Dorsolateral prefrontal cortex (tissue), 120 donors: ENCODE measurements at regions of chr7 and their contacts with region 1.

Region 1: GRCh38 chr7:105890290-105890997 is 14.0 kb upstream of the ATXN7L1 start:
- DNase-seq: no peak
- H3K4me3 ChIP-seq: no peak overlapping the region
- H3K27ac ChIP-seq: no peak overlapping the region
- H3K27me3 ChIP-seq: no peaks in the 10 kb centered on the region
- CTCF ChIP-seq: no peak

Region 2: DNA sequence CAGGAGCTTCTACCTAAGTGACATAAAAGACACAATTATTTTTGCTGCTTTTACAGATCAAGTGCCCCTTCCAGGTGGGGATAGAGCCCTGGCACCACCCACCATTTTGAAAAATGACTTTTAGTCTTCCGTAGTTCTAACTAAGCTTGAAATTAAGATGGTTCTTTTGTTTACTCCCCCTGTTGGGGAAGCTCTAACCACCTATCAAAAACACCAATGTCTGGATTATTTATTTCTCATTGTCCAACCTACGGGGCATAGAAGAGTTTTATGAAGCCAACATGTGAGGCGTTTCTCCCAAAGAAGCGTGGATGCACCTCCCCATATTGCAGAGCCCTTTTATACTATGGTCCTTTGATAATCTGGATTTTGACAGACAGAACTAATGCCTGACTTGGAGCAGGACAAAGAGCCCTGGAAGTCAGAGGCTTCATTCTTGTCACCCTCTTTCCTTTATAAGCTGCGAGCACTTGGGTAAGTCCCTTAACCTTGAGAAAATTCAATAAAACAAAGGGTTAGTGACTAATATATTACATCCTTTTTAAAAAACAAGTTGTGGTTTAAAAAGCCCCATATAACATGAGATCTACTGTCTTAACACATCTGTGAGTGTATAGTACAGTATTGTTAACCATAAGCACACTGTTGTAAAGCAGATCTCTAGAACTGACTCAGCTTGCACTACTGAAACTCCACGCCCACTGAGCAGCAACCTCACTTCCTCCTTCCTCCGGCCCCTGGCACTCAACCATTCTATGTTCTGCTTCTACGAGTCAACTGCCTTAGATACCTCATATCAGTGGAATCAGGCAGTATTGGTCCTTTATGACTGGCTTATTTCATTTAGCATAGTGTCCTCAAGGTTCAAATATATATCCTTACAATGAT is 81.5 kb before region 1 on chr7:
- intact Hi-C with region 1: no loop called
- DNase-seq: no peak
- H3K4me3 ChIP-seq: no peak overlapping the region
- H3K27ac ChIP-seq: no peak overlapping the region
- H3K27me3 ChIP-seq: no peaks in the 10 kb centered on the region
- CTCF ChIP-seq: no peak

Region 3: GRCh38 chr7:105916603-105917002 is 26.2 kb after region 1 on chr7:
- intact Hi-C with region 1: no loop called
- DNase-seq: no peak
- H3K4me3 ChIP-seq: no peak overlapping the region
- H3K27ac ChIP-seq: no peak overlapping the region
- H3K27me3 ChIP-seq: no peaks in the 10 kb centered on the region
- CTCF ChIP-seq: no peak

Region 4: DNA sequence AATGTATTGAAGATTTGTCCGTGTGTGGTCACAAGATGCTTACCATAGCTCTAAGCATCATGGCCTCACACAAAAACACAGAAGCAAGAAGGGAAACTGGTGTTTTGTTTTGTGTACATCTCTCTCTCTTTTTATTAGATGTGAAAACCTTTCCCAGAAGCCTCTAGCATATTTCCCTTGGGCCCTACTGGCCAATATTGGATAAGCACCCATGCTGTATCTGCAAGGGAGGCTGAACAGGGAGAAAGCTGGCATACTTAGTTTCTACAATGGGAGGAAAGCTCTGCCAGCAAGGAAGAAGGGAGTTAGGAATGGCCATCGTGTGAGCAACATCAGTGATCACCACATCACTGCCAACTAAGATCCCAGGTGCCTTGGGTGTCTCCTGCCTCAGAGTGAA is 403.9 kb after region 1 on chr7:
- intact Hi-C with region 1: loop called in 1 of 2 experiments (anchors 5 kb)
- DNase-seq: no peak
- H3K4me3 ChIP-seq: no peak overlapping the region
- H3K27ac ChIP-seq: no peak overlapping the region
- H3K27me3 ChIP-seq: no peaks in the 10 kb centered on the region
- CTCF ChIP-seq: peak in 4 of 56 donors; percentile 13 to 43 (median 16)